Endothelial cell of umbilical vein (primary cell): ENCODE measurements at regions of chr4 and their contacts with region 1.

Region 1: DNA sequence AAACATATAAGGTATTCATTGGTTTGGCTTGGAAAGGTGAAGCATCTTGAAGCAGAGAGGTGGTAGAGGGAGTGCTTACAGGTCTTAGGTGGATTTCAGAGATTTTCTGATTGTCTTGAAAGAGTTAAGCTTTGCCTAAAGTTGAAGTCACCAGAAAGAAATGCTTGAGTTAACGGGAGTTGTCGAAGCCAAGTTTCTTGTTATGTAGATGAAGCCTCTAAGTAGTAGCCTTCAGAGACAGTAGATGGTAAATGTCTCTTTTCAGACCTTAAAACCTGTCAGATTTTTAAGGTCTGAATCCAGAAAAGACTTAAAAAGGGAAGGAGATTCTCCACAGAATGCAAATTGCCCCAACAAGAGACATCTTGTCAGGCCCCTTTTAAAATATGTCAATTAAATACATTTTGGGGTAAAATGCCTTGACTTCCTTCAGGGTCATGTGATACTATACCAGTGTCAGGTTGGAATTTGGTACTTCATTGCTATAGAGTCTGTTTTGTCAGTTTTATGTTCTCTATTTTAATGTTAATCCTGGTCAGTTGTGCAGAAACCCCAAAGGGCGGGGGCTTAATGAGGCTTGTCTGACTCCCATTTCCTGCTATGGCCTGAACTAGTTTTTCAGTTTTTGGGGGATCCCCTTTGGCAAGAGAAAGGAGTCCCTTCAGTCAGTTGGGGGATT is 81.0 kb downstream of the PCDH18 start:
- DNase-seq: no peak
- H3K4me3 ChIP-seq: no peak overlapping the region
- H3K27ac ChIP-seq: no peak overlapping the region
- H3K4me1 ChIP-seq: no peaks in the 10 kb centered on the region
- H3K27me3 ChIP-seq: no peaks in the 10 kb centered on the region
- CTCF ChIP-seq: no peak
- POLR2A ChIP-seq: no peak

Region 2: DNA sequence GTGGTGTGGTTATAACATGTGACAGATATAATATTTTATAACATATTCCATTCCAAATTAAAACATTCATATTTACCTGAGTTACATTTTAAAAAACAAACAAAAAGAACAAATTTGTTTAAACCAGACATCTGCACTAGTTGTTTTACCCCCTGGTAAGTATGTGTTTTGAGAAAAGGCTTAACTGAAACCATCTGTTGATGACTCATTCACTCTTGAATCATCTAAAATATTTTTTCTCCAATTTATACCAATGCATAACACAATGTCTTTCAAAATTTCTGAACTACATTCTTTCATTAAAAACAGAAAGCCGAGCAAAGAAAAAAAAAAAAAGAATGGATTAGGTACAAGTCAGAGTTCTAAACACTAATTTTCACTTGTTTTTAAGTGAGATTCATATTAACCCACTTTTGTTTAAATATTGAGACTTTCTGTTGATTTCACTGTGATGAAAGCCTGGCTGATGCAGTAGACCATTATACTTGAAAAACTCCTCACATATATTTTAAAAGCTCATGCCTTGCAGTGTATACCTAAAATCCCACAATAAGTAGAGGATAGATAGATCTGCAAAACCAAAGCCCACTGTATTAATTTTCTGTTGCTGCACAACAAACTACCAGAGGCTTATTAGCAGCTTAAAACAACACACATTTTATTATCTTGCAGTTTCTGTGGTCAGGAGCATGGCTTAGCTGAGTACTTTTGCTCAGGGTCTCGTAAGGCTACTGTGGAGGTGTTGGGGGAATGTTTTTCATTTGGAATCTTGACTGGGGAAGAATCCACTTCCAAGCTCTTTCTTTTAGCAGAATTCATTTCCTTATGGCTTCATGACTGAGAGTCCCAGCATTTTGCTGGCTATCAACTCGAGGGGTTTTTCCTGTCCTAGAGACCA is 140.5 kb before region 1 on chr4:
- CTCF ChIA-PET with region 1: no interaction called
- POLR2A ChIA-PET with region 1: no interaction called
- dilution Hi-C with region 1: no loop called
- intact Hi-C with region 1: loop called (anchors 10 kb)
- DNase-seq: no peak
- H3K4me3 ChIP-seq: no peak overlapping the region
- H3K27ac ChIP-seq: no peak overlapping the region
- H3K4me1 ChIP-seq: no peaks in the 10 kb centered on the region
- H3K27me3 ChIP-seq: no peaks in the 10 kb centered on the region
- CTCF ChIP-seq: no peak
- POLR2A ChIP-seq: no peak